Tibial artery (tissue), 4 donors: ENCODE measurements at regions of chrX and their contacts with region 1.

Region 1: DNA sequence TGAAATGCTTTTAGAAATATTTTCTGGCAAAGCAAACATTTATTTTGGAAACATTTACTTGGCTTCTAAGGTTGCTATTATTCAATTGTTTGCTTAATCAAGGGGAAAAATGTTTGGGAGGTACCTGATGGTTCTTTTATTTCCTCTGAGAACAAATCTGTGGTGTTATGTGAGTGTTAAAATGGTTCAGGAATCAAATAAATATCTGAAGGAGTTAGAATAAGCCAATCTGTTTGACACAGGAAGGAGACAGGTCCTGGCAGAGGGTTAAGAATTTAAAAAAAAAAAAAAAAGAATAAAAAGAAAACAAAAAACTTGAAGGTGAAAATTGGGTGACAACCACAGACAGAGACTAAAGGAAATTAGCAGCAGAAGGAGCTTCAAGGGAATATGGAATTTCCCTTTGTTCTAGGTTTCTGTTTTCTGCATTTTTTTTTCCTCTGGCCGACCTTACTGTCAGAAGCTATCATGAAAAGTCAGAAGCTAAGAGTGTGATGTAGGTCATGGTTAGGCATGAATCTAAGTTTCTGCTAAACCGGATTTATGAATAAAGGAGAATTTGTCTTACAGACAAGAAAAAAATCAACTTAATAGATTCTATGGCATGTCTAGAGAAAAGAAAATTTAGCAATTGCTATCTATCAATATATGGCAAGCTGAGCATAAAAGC is 78.6 kb upstream of the PNPLA4 start:
- DNase-seq: no peak
- H3K4me3 ChIP-seq: no peak overlapping the region
- H3K27ac ChIP-seq: no peak overlapping the region
- H3K4me1 ChIP-seq: no peaks in the 10 kb centered on the region
- H3K27me3 ChIP-seq: no peaks in the 10 kb centered on the region
- CTCF ChIP-seq: no peak

Region 2: DNA sequence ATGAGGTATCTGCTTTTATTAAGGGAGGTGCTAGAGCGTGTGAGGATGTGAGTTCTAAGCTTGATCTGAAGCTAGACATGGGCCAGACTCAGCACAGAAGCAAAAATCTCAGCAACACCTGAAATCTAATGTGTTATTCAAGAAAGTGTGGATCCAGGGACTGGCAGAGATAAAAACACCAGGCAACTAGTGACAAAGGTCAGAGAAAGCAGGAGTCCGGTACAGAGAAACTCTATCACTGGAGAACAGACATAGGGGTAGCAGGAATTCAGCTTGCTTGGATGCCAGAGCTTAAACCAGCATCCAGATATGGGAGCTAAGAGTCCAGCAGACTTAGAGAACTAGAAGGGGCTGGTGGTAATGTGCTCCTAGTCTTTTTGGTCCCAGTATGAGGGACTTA is 128.9 kb before region 1 on chrX:
- intact Hi-C with region 1: no loop called
- DNase-seq: no peak
- H3K4me3 ChIP-seq: no peak overlapping the region
- H3K27ac ChIP-seq: no peak overlapping the region
- H3K4me1 ChIP-seq: no peaks in the 10 kb centered on the region
- H3K27me3 ChIP-seq: no peaks in the 10 kb centered on the region
- CTCF ChIP-seq: no peak

Region 3: GRCh38 chrX:7941390-7942042 is 64.3 kb before region 1 on chrX:
- intact Hi-C with region 1: no loop called
- DNase-seq: no peak
- H3K4me3 ChIP-seq: no peak overlapping the region
- H3K27ac ChIP-seq: no peak overlapping the region
- H3K4me1 ChIP-seq: no peaks in the 10 kb centered on the region
- H3K27me3 ChIP-seq: no peaks in the 10 kb centered on the region
- CTCF ChIP-seq: no peak

Region 4: GRCh38 chrX:8714164-8714563 is 708.4 kb after region 1 on chrX:
- intact Hi-C with region 1: loop called (anchors 10 kb)
- DNase-seq: no peak
- H3K4me3 ChIP-seq: no peak overlapping the region
- H3K27ac ChIP-seq: no peak overlapping the region
- H3K4me1 ChIP-seq: no peaks in the 10 kb centered on the region
- H3K27me3 ChIP-seq: no peaks in the 10 kb centered on the region
- CTCF ChIP-seq: no peak